Activated CD4-positive, alpha-beta memory T cell treated with anti-CD3 and anti-CD28 coated beads for 36 hours (primary cell): ENCODE measurements at regions of chr16 and their contacts with region 1.

Region 1: GRCh38 chr16:1054660-1055556 is 17.6 kb upstream of the SSTR5 start:
- DNase-seq: peak; percentile 47
- H3K4me3 Mint-ChIP-seq: no peak overlapping the region
- H3K27ac Mint-ChIP-seq: no peak overlapping the region
- H3K4me1 Mint-ChIP-seq: no peaks in the 10 kb centered on the region
- H3K27me3 Mint-ChIP-seq: no peaks in the 10 kb centered on the region

Region 2: DNA sequence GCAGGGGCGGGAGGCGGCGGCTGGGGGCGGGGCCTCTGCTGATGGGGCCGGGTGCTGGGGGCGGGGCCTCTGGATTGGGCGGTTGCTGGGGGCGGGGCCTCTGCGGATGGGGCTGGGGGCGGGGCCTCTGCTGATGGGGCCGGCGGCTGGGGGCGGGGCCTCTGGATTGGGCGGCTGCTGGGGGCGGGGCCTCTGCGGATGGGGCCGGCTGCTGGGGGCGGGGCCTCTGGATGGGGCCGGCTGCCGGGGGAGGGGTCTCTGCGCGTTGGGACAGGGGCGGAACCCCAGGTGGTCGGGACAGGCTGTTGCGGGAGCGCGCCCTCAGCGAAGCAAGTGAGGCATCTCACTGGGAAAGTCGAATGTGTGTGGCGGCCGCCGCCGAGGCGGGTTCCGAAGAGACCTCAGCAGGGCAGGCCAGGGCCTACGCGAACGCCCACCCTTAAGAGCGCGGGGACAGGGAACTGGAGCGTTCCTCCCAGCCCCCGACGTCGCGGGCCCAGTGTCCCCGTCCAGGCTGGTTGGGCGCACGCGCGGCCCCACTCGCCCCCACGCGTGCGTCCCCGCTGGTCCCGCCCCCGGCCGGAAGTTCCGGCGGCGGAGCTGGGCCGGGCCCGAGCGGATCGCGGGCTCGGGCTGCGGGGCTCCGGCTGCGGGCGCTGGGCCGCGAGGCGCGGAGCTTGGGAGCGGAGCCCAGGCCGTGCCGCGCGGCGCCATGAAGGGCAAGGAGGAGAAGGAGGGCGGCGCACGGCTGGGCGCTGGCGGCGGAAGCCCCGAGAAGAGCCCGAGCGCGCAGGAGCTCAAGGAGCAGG is 374.9 kb before region 1 on chr16 and contains the start of gene STUB1:
- CTCF ChIA-PET with region 1: no interaction called
- POLR2A ChIA-PET with region 1: no interaction called
- intact Hi-C with region 1: no loop called
- DNase-seq: peak; percentile 94
- H3K4me3 Mint-ChIP-seq: peak within 1 kb of the TSS; percentile 82
- H3K27ac Mint-ChIP-seq: peak within 1 kb of the TSS; percentile 87
- H3K4me1 Mint-ChIP-seq: peaks cover 39% of the 10 kb centered on the region
- H3K27me3 Mint-ChIP-seq: no peaks in the 10 kb centered on the region
- total RNA-seq, gene STUB1: 70.9 to 74.9 TPM

Region 3: GRCh38 chr16:813204-813915 is 241.5 kb before region 1 on chr16:
- CTCF ChIA-PET with region 1: interaction called, 13 read pairs
- POLR2A ChIA-PET with region 1: no interaction called
- intact Hi-C with region 1: loop called (anchors 5 kb)
- DNase-seq: peak; percentile 61
- H3K4me3 Mint-ChIP-seq: no peak overlapping the region
- H3K27ac Mint-ChIP-seq: no peak overlapping the region
- H3K4me1 Mint-ChIP-seq: peaks cover 3% of the 10 kb centered on the region
- H3K27me3 Mint-ChIP-seq: peaks cover 22% of the 10 kb centered on the region

Region 4: GRCh38 chr16:997440-998051 is 57.4 kb before region 1 on chr16:
- CTCF ChIA-PET with region 1: interaction called, 9 read pairs
- POLR2A ChIA-PET with region 1: no interaction called
- intact Hi-C with region 1: loop called (anchors 2 kb)
- DNase-seq: peak; percentile 78
- H3K4me3 Mint-ChIP-seq: peak overlapping the region; percentile 67
- H3K27ac Mint-ChIP-seq: peak overlapping the region; percentile 49
- H3K4me1 Mint-ChIP-seq: peaks cover 52% of the 10 kb centered on the region
- H3K27me3 Mint-ChIP-seq: no peaks in the 10 kb centered on the region

Region 5: GRCh38 chr16:1019231-1020090 is 35.4 kb before region 1 on chr16:
- CTCF ChIA-PET with region 1: no interaction called
- POLR2A ChIA-PET with region 1: no interaction called
- intact Hi-C with region 1: no loop called
- DNase-seq: no peak
- H3K4me3 Mint-ChIP-seq: no peak overlapping the region
- H3K27ac Mint-ChIP-seq: no peak overlapping the region
- H3K4me1 Mint-ChIP-seq: no peaks in the 10 kb centered on the region
- H3K27me3 Mint-ChIP-seq: peaks cover 2% of the 10 kb centered on the region

Region 6: DNA sequence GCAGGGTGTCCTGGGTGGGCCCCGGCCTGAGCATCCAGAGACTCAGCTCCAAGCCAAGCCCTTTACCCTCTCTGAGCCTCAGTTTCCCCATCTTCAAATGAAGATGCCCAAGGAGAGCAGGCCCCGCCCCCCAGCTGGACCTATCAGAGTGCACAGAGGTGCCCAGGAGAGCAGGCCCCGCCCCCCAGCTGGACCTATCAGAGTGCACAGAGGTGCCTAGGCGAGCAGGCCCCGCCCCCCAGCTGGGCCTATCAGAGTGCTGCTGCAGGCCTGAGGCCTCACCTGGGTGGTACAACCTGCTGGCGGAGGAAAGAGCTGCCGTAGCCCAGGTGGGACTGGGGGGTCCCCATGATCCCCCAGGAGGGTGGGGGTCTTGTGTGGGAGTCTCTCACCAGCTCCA is 14.2 kb after region 1 on chr16:
- CTCF ChIA-PET with region 1: interaction called, 10 read pairs
- POLR2A ChIA-PET with region 1: no interaction called
- intact Hi-C with region 1: no loop called
- DNase-seq: peak; percentile 19
- H3K4me3 Mint-ChIP-seq: no peak overlapping the region
- H3K27ac Mint-ChIP-seq: no peak overlapping the region
- H3K4me1 Mint-ChIP-seq: no peaks in the 10 kb centered on the region
- H3K27me3 Mint-ChIP-seq: peaks cover 29% of the 10 kb centered on the region

Region 7: GRCh38 chr16:1278477-1278876 is 223.6 kb after region 1 on chr16:
- CTCF ChIA-PET with region 1: no interaction called
- POLR2A ChIA-PET with region 1: no interaction called
- intact Hi-C with region 1: no loop called
- DNase-seq: no peak
- H3K4me3 Mint-ChIP-seq: no peak overlapping the region
- H3K27ac Mint-ChIP-seq: no peak overlapping the region
- H3K4me1 Mint-ChIP-seq: no peaks in the 10 kb centered on the region
- H3K27me3 Mint-ChIP-seq: peaks cover 13% of the 10 kb centered on the region